HEK293 (cell line): ENCODE measurements at regions of chr10 and their contacts with region 1.

Region 1: DNA sequence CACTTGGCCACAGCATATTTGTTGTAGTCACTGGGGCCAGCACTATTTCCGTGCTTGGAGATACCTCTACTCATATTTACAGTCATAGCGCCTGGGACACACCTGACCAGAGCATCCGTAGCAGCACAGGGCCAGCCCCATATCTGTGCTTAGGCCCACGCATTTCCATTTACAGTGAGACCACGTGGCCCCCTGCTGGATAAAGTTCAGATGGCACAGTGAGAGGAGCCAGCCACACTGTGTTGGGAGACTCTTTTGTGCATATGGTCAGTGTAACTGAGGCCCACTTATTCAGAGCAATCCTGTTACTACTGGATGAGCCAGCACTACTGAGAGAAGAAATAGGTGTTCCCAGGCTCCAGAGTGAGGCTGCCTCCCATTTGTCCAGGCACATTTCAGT is 455.3 kb downstream of the REEP3 start:
- H3K4me3 ChIP-seq: no peak overlapping the region
- H3K27ac ChIP-seq: no peak overlapping the region
- H3K4me1 ChIP-seq: no peaks in the 10 kb centered on the region
- CTCF ChIP-seq: peak; percentile 57; the same call in 1 of the 2 replicates

Region 2: DNA sequence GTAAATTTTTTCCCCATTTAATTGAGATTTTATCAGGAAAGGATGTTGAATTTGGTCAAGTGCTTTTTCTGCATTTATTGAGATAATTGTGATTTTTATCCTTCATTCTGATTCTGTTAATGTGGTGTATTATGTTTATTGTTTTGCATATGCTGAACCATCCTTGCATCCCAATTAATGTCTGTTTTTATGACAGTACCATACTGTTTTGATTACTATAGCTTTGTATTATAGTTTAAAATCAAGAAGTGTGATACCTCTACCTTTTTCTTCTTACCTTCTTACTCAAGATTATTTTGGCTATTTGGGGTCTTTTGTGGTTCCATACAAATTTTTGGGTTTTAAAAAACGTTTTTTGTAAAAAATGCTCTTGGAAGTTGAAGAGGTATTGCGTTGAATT is 98.1 kb before region 1 on chr10:
- CTCF ChIA-PET with region 1: interaction called, 51 read pairs
- POLR2A ChIA-PET with region 1: no interaction called
- H3K4me3 ChIP-seq: no peak overlapping the region
- H3K27ac ChIP-seq: no peak overlapping the region
- H3K4me1 ChIP-seq: no peaks in the 10 kb centered on the region
- CTCF ChIP-seq: no peak

Region 3: DNA sequence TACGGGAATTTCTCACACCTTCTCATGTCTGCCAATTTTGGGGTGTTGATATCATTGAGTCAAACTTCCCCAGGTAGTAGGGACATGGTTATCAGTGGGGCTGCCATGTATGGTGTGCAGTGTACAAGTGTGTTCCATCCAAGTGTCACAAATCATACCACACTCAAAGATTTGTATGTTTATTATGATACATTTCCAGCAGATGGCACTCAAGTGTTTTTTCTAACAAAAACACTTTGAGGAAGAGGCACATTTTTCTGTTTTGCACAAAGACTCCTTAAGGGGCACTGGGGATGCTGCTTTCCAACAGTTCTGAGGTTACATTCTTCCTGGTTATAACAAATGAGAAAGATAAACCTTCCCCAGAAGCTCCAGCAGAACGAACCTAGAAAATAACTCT is 40.8 kb before region 1 on chr10:
- CTCF ChIA-PET with region 1: interaction called, 32 read pairs
- POLR2A ChIA-PET with region 1: no interaction called
- H3K4me3 ChIP-seq: no peak overlapping the region
- H3K27ac ChIP-seq: no peak overlapping the region
- H3K4me1 ChIP-seq: no peaks in the 10 kb centered on the region
- CTCF ChIP-seq: peak; percentile 17; the same call in 1 of the 2 replicates

Region 4: GRCh38 chr10:63987212-63987611 is 10.7 kb after region 1 on chr10:
- CTCF ChIA-PET with region 1: interaction called, 10 read pairs
- POLR2A ChIA-PET with region 1: no interaction called
- H3K4me3 ChIP-seq: no peak overlapping the region
- H3K27ac ChIP-seq: no peak overlapping the region
- H3K4me1 ChIP-seq: no peaks in the 10 kb centered on the region
- CTCF ChIP-seq: no peak

Region 5: GRCh38 chr10:64156166-64156565 is 179.6 kb after region 1 on chr10:
- CTCF ChIA-PET with region 1: no interaction called
- POLR2A ChIA-PET with region 1: no interaction called
- H3K4me3 ChIP-seq: no peak overlapping the region
- H3K27ac ChIP-seq: no peak overlapping the region
- H3K4me1 ChIP-seq: no peaks in the 10 kb centered on the region
- CTCF ChIP-seq: no peak

Region 6: DNA sequence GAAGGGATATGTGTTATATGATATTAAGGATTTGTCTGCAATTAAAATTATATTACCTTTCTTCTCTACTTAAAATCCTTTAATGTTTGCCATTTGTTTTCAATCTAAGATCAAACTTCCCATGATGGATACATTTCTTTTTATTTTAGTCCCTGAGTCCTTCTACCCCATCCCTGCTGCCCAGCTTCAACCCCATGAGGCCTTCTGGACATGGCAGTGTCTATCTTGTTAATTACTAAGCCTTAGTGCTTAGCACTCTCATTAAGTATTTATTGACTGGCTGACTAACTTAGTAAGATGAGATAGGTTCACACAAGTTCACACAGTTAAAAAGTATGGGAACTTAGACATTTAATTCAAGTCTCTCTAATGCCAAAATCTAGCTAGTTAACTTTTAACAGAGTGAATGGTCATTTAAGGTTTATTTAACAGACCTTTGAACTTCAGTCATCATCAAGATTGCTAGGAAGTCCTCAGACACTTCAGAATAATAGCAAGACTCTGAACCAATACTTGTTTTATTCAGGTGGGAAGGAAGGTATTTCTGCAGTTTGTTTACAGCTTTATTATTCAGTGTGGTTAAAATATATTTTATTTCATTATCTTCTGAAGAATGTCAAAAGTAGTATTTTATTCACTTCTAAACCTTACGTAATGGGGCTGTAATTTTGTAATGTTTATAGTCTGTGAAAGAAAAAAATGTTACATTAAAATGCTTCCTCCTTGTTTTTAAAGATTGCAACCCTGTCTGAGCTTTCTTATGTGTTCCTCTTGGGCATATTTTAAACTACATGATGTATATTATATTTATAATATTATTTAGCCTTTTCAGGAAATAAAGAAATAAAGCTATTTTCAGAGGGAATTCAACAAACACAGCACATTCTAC is 393.6 kb after region 1 on chr10:
- CTCF ChIA-PET with region 1: no interaction called
- POLR2A ChIA-PET with region 1: no interaction called
- H3K4me3 ChIP-seq: no peak overlapping the region
- H3K27ac ChIP-seq: no peak overlapping the region
- H3K4me1 ChIP-seq: no peaks in the 10 kb centered on the region
- CTCF ChIP-seq: no peak